Heart right ventricle (tissue), 16 donors: ENCODE measurements at regions of chr3 and their contacts with region 1.

Region 1: GRCh38 chr3:39189959-39190269 is 2.5 kb downstream of the XIRP1 start:
- DNase-seq: peak; percentile 52 to 78
- ATAC-seq: peak; percentile 3 to 52 (median 32)
- H3K4me3 ChIP-seq: peak overlapping the region in 9 of 10 donors; percentile 1 to 68 (median 57)
- H3K27ac ChIP-seq: peak overlapping the region; percentile 70 to 98 (median 90)
- H3K4me1 ChIP-seq: peaks cover 10 to 59% (median 29%) of the 10 kb centered on the region in 9 donors
- H3K27me3 ChIP-seq: no peaks in the 10 kb centered on the region
- CTCF ChIP-seq: peak; percentile 8 to 87 (median 76)

Region 2: DNA sequence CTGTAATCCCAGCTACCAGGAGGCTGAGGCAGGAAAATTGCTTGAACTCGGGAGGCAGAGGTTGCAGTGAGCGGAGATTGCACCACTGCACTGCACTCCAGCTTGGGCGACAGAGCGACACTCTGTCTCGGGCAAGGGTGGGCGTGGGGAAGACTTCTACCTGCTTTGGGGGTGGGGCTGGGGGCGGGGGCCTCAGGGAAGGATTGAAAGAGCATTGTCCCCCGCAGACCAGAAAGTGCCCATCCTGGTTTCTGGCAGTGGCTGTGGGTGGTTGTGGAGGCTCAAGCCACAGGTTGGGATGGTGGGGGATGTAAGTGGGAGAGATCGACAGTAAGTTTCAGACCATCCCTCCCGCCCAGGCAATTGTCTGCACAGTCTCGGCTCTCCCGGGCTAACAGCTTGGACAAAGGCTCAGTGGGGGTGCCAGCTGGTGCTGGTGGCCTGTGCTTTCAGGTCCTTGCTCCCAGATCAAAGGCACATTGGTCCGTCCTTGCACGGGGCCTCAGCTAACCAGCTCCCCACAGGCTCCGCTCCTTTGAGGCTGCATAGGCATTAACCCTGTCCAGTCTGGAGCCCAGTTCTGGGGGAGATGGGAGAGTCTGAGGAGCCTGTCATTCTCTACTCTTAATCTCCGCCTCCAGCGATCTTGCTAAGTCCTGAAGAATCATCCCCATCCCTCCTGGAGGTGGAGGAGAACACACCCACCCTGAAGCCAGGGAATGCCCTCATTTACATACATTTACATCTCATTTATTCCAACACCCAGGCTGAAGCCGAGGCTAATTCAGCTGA is 549.1 kb before region 1 on chr3:
- intact Hi-C with region 1: no loop called
- DNase-seq: no peak
- ATAC-seq: no peak
- H3K4me3 ChIP-seq: no peak overlapping the region
- H3K27ac ChIP-seq: peak overlapping the region in 6 of 10 donors; percentile 10 to 55 (median 38)
- H3K4me1 ChIP-seq: peaks cover 0 to 99% (median 52%) of the 10 kb centered on the region in 9 donors
- H3K27me3 ChIP-seq: peaks cover 0 to 5% (median 0%) of the 10 kb centered on the region in 7 donors
- CTCF ChIP-seq: no peak

Region 3: GRCh38 chr3:39141171-39141995 is 48.5 kb before region 1 on chr3:
- intact Hi-C with region 1: loop called in 5 of 10 experiments (anchors 5 to 10 kb)
- DNase-seq: peak; percentile 60 to 67
- ATAC-seq: peak; percentile 17 to 61 (median 50)
- H3K4me3 ChIP-seq: no peak overlapping the region
- H3K27ac ChIP-seq: peak overlapping the region in 8 of 10 donors; percentile 4 to 65 (median 47)
- H3K4me1 ChIP-seq: peaks cover 37 to 78% (median 58%) of the 10 kb centered on the region in 9 donors
- H3K27me3 ChIP-seq: no peaks in the 10 kb centered on the region
- CTCF ChIP-seq: no peak

Region 4: DNA sequence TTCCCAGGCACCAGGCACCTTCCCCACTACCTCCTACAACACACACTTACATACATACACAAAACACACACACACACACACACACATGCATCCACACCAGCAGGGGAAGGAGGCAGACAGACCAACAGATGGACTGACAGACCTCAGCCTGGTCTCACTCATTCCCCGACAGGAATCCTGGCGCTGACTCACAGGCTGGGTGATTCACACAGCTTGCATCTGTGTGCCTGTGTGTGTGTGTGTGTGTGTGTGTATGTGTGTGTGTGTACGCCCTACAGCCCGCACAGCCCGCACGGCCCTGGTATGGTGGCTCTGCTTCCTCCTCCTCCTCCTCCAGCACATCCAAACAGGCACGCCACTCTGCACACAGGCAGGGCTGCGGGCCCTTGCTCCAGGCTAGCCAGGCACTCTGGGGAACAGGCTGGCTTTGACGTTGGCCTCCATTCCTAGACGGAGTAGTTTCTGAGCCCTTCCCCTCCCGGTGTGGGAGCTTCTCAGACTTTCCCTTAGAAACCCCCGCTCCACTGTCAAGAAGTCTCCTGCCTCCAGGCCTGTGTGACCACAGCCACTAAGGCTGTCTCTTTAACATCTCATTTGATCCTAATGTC is 42.8 kb before region 1 on chr3:
- intact Hi-C with region 1: loop called in 1 of 10 experiments (anchors 5 kb)
- DNase-seq: peak; percentile 62 to 72
- ATAC-seq: peak; percentile 34 to 71 (median 56)
- H3K4me3 ChIP-seq: peak overlapping the region in 7 of 10 donors; percentile 13 to 34 (median 19)
- H3K27ac ChIP-seq: peak overlapping the region; percentile 24 to 100 (median 75)
- H3K4me1 ChIP-seq: peaks cover 50 to 94% (median 76%) of the 10 kb centered on the region in 9 donors
- H3K27me3 ChIP-seq: no peaks in the 10 kb centered on the region
- CTCF ChIP-seq: no peak